Right ventricle myocardium inferior (tissue), 1 donor: ENCODE measurements at regions of chr2 and their contacts with region 1.

Region 1: GRCh38 chr2:171433763-171434670 is at the starts of genes DCAF17 and METTL8:
- DNase-seq: peak; percentile 98
- ATAC-seq: peak; percentile 99
- total RNA-seq, gene DCAF17: 7.6 TPM
- total RNA-seq, gene METTL8: 12.0 TPM

Region 2: DNA sequence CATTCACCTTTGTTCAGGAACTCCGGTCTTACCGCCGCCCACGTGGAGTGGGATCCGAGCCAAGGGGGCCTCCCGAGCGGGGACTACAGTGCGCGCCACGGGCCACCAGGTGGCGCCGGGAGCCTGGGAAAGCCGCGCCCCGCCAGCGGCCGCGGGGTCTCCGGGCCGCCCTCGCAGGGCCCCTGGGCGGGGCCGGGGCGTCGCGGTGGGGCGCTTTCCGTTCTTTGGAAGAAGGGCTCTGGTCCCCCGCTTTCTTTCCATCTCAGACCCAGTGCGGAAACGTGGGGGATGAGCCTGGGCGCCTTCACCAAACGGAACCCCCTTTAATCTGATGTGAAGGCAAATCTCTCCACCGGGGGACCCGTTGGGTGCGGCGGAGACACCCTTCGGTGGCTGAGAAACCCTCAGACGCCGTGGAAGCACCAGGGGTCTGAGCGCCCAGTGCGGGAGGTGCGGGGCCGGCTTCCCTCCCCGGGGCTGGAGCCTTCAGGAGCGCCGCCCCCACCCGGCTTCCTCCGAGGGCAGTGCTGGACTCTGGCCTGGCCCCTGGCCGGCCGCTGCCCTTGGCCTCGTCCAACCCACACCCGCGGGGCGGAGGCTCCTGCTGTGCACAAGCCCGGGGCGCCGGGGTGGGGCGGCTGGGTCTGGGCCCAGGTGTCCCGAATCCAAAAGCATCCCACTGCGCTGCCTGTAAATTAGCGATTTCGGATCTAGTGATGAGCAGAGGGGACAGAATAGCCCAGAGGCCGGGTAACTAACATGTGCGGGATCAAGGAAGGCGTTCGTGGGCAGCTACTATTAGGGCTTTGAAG is 460.3 kb before region 1 on chr2:
- intact Hi-C with region 1: loop called (anchors 5 kb)
- DNase-seq: peak; percentile 91
- ATAC-seq: peak; percentile 96

Region 3: GRCh38 chr2:171160119-171160955 is 273.7 kb before region 1 on chr2 and contains the start of gene TLK1:
- intact Hi-C with region 1: loop called (anchors 1 kb)
- DNase-seq: peak; percentile 86
- ATAC-seq: peak; percentile 78
- total RNA-seq, gene TLK1: 26.7 TPM

Region 4: DNA sequence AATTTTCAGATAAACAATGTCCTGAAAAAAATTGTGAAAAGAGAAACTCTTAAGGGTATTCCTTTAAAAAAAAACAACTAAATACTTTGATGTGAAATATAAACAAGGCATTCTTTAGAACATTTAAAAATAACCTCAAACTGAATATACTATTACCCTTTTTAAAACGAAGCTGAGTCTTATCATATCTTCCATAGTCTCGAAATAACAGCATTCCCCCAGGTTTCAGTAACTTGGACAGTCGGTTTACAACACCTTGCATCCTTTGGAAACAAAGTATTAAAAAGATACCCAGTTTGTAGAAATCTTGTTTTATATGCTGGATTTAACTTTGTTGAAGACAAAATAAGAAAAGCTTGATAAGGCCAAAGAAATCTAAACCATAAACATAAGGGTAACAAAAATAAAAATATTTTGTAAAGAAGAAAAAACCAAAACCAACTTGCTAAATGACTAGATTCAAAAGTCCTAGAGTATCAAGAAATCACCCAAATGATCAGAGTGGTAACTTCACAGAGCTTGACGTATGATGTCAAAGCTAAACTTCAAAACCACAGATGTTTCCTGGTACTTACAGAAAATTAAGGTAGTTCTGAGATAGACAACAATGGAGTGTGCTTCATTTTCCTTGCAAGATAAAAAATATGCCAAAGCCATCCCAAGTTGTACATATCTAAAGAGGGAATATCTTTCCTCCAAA is 108.0 kb before region 1 on chr2:
- intact Hi-C with region 1: no loop called
- DNase-seq: no peak
- ATAC-seq: no peak

Region 5: GRCh38 chr2:171523088-171524017 is 89.3 kb after region 1 on chr2:
- intact Hi-C with region 1: loop called (anchors 1 kb)
- DNase-seq: peak; percentile 89
- ATAC-seq: peak; percentile 74

Region 6: DNA sequence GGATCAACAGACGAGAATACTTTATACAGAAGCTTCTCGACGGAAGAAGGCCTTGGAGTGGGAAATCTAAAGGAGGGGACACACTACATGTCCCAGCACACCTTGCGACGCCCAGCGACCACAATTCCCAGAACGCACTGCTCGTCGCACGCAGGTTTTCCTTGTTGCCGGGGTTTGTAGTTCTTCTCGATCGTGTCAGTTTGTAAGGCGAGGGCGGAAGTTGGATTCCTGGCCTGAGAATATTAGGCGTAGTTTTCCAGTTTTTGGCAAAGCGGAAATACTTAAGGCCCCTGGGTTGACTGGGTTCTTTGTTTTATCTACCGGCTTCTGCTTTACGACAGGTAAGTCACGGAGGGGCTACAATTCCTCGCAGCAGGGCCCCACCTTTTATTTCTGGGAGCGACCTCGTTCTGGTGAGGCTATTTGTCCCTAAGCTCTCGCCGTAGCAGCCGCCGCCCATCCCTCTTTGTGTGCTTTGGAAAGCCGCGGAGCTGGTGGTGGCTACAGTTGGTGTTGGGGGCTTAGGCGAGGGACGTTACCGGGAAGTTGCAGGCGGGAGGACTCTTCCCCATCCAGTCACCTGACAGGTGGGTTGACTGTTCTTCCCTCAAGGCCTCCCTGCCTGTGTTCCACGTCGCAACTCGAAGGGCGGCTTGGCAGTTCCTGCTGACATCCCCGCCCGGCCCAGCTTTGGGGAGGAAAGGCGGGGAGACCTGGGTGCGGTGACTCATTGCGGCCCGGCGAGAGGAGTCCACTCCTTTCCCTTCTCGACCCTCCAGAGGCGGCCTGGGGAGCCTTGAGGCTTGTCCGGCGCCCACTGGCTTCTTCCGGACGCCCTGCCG is 253.5 kb after region 1 on chr2 and contains the start of gene DYNC1I2:
- intact Hi-C with region 1: loop called (anchors 2 kb)
- DNase-seq: peak; percentile 94
- ATAC-seq: peak; percentile 98
- total RNA-seq, gene DYNC1I2: 73.5 TPM

Region 7: GRCh38 chr2:172555522-172556283 is 1121.7 kb after region 1 on chr2 and contains the start of gene PDK1:
- intact Hi-C with region 1: loop called (anchors 5 kb)
- DNase-seq: peak; percentile 96
- ATAC-seq: peak; percentile 98
- total RNA-seq, gene PDK1: 47.7 TPM